CD4-positive, alpha-beta T cell (primary cell): ENCODE measurements at regions of chr6 and their contacts with region 1.

Region 1: GRCh38 chr6:138428944-138429598 is 25.0 kb downstream of the HEBP2 start:
- DNase-seq: peak in 4 of 14 experiments; percentile 36 to 71 (median 66)
- ATAC-seq: peak; percentile 58
- H3K4me3 ChIP-seq: no peak overlapping the region
- H3K4me3 Mint-ChIP-seq: no peak overlapping the region
- H3K27ac ChIP-seq: no peak overlapping the region
- H3K27ac Mint-ChIP-seq: no peak overlapping the region
- H3K4me1 ChIP-seq: peaks cover 3% of the 10 kb centered on the region
- H3K4me1 Mint-ChIP-seq: peaks cover 6% of the 10 kb centered on the region
- H3K27me3 ChIP-seq: no peaks in the 10 kb centered on the region
- H3K27me3 Mint-ChIP-seq: no peaks in the 10 kb centered on the region
- CTCF ChIP-seq: peak; percentile 86

Region 2: DNA sequence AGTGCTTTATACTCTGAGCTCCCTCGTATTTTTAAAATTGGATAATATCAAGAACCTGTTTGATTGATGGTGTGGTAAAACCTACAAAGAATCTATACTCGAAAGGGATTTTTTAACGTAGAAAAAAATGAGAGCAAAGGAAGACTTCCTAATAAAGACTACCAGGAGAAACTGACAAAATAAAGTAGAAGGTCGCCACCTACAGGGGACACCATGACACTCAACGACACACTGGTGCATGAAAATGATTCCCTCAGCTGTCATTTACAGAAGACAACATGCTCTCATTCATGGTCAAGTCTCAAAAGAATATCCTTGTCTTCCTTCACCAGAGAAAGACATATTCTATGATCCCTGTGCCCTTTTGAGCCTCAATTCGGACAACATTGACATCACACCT is 80.3 kb after region 1 on chr6:
- CTCF ChIA-PET with region 1: interaction called, 8 read pairs
- POLR2A ChIA-PET with region 1: no interaction called
- intact Hi-C with region 1: loop called (anchors 1 kb)
- DNase-seq: peak in 13 of 14 experiments; percentile 9 to 75 (median 35)
- ATAC-seq: peak; percentile 44
- H3K4me3 ChIP-seq: no peak overlapping the region
- H3K4me3 Mint-ChIP-seq: no peak overlapping the region
- H3K27ac ChIP-seq: no peak overlapping the region
- H3K27ac Mint-ChIP-seq: no peak overlapping the region
- H3K4me1 ChIP-seq: no peaks in the 10 kb centered on the region
- H3K4me1 Mint-ChIP-seq: peaks cover 5% of the 10 kb centered on the region
- H3K27me3 ChIP-seq: no peaks in the 10 kb centered on the region
- H3K27me3 Mint-ChIP-seq: no peaks in the 10 kb centered on the region
- CTCF ChIP-seq: peak; percentile 77

Region 3: DNA sequence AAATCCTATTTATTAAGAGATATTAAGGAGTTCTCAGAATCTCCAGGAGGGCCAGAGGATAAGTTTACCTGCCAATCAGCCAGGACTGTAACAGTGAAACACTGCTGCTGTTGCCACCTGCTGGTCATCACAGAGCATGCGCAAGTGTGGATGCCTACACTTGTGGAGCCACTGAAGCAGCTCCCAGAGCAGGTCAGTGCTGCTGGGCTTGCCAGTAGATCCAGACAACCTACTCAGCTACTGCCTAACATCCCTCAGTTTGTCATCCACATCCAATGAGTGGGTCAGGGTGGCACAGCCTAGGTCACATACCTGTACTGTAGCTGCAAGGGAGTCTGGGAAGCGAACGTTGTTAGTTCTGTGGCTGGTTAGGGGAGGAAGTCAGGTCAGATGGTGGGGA is 88.6 kb after region 1 on chr6:
- CTCF ChIA-PET with region 1: interaction called, 11 read pairs
- POLR2A ChIA-PET with region 1: no interaction called
- intact Hi-C with region 1: loop called in 1 of 2 experiments (anchors 1 kb)
- DNase-seq: peak; percentile 28 to 78 (median 44)
- ATAC-seq: peak; percentile 81
- H3K4me3 ChIP-seq: no peak overlapping the region
- H3K4me3 Mint-ChIP-seq: no peak overlapping the region
- H3K27ac ChIP-seq: no peak overlapping the region
- H3K27ac Mint-ChIP-seq: no peak overlapping the region
- H3K4me1 ChIP-seq: peaks cover 6% of the 10 kb centered on the region
- H3K4me1 Mint-ChIP-seq: peaks cover 10% of the 10 kb centered on the region
- H3K27me3 ChIP-seq: no peaks in the 10 kb centered on the region
- H3K27me3 Mint-ChIP-seq: peaks cover 15% of the 10 kb centered on the region
- CTCF ChIP-seq: peak; percentile 78

Region 4: DNA sequence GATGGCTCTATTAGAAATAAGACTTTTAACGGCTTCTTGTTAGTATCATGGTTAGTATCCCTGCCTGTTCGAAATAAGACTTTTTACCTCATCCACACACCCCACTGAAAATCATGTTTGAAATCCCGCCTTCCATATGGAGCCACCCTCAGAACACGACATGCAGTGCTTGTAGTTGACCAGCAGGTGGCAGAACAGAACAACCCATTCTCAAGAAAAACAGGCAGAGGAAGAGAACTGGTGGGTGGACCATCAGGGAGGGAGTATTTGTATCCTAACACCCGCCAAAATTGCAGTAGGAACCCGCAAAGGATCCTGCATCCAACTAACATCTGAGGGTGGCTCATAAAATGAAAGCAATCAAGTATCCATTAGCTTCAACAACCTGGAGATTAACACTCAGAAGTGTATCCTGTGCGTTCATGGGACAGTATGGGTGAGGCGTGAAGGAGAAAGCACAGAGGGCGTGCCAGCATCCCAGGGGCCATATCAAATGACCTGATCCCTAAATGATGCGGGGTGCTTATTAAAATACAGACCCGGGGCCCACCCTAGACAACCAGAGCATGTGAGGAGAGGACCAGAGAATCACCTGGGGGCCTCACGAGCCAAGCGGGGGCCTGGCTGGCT is 159.8 kb after region 1 on chr6:
- CTCF ChIA-PET with region 1: no interaction called
- POLR2A ChIA-PET with region 1: no interaction called
- intact Hi-C with region 1: loop called (anchors 2 kb)
- DNase-seq: peak; percentile 9 to 80 (median 28)
- ATAC-seq: peak; percentile 39
- H3K4me3 ChIP-seq: no peak overlapping the region
- H3K4me3 Mint-ChIP-seq: no peak overlapping the region
- H3K27ac ChIP-seq: no peak overlapping the region
- H3K27ac Mint-ChIP-seq: no peak overlapping the region
- H3K4me1 ChIP-seq: peaks cover 6% of the 10 kb centered on the region
- H3K4me1 Mint-ChIP-seq: peaks cover 20% of the 10 kb centered on the region
- H3K27me3 ChIP-seq: no peaks in the 10 kb centered on the region
- H3K27me3 Mint-ChIP-seq: no peaks in the 10 kb centered on the region
- CTCF ChIP-seq: peak; percentile 96

Region 5: GRCh38 chr6:138765896-138766655 is 337.0 kb after region 1 on chr6:
- CTCF ChIA-PET with region 1: no interaction called
- POLR2A ChIA-PET with region 1: no interaction called
- intact Hi-C with region 1: loop called in 1 of 2 experiments (anchors 5 kb)
- DNase-seq: peak in 4 of 14 experiments; percentile 4 to 54 (median 52)
- ATAC-seq: peak; percentile 41
- H3K4me3 ChIP-seq: no peak overlapping the region
- H3K4me3 Mint-ChIP-seq: no peak overlapping the region
- H3K27ac ChIP-seq: no peak overlapping the region
- H3K27ac Mint-ChIP-seq: no peak overlapping the region
- H3K4me1 ChIP-seq: no peaks in the 10 kb centered on the region
- H3K4me1 Mint-ChIP-seq: no peaks in the 10 kb centered on the region
- H3K27me3 ChIP-seq: no peaks in the 10 kb centered on the region
- H3K27me3 Mint-ChIP-seq: no peaks in the 10 kb centered on the region
- CTCF ChIP-seq: peak; percentile 89